Tibial artery (tissue), 4 donors: ENCODE measurements at regions of chr4 and their contacts with region 1.

Region 1: GRCh38 chr4:1011022-1011694 is at the start of gene FGFRL1:
- DNase-seq: peak; percentile 88 to 95
- H3K4me3 ChIP-seq: peak within 1 kb of the TSS; percentile 65 to 66
- H3K27ac ChIP-seq: peak within 1 kb of the TSS; percentile 69 to 84
- H3K4me1 ChIP-seq: peaks cover 0 to 43% (median 32%) of the 10 kb centered on the region in 4 donors
- H3K27me3 ChIP-seq: peaks cover 0 to 23% of the 10 kb centered on the region in 2 donors
- CTCF ChIP-seq: no peak

Region 2: DNA sequence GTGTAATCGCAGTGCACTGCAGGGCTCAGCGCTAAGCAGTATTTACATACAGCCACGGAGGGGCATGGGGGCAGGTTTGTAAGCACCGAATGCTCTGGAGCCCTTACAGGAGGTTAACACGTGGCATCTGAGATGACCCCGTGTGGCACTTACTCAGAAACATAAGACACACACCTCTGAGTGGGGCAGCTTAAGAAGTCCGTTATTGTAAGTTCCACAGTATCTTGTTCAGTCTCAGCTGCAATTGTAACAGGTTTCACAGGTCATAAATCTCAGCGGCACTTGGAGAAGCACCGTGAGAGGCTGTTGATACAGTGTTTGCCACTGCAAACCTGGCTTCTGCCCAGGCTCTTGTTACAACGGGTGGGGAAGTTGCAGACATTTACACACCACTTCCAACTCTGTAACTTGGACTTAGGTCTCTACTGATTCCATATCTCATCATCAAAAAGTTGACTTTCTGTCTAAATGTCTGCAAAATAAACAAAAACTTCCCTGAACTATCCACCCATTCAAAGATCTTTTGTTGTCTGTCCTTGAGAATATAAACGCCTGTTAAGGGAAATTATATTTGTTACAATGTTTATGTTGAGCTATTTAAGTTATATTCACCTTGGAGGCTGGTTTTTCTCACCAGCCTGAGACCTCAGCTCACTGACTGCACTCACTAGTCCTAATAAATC is 195.6 kb before region 1 on chr4:
- intact Hi-C with region 1: no loop called
- DNase-seq: no peak
- H3K4me3 ChIP-seq: no peak overlapping the region
- H3K27ac ChIP-seq: no peak overlapping the region
- H3K4me1 ChIP-seq: no peaks in the 10 kb centered on the region
- H3K27me3 ChIP-seq: peaks cover 0 to 74% of the 10 kb centered on the region in 2 donors
- CTCF ChIP-seq: no peak

Region 3: DNA sequence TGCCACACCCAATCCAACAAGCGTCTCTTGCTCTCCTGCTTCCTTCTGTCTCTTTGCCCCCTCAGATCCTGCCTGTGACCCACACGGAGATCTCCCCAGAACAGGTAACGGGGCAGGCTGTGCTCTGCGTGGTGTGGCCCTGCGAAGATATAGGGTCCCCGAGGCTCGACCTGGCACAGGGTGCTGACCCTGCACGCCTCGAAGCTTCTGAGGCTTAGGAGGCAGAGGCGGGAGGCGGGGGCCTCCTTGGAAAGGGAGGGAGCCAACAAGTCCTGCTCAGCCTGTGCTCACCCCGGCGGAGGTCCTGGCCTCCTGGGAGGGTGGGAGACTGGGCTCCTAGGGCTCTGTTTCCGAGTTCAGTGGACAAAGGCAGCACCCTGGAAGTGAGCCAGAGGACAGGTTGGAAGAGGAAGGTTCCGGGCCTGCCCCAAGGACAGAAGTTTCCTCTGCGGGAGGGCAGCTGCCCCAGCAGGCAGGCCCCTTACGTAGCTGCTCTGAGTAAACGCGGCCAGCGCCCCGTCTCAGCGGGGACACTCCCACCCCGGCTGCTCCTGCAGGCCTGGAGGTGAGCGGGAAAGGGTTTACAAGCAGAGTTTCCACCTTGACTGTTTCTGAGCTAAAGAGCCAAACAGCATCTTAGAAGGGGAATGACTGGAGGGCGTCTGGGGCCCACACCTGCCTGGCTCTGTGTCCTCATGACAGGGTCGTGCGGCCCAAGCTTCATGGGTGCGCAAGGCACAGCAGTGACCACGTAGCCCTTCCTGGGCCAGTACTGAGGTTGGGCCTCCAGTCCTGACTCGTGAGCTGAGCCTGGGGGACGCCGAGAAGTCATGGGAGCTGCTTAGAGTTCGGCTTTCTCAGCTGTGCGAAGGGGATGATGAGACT is 62.9 kb before region 1 on chr4:
- intact Hi-C with region 1: no loop called
- DNase-seq: peak; percentile 11 to 59
- H3K4me3 ChIP-seq: no peak overlapping the region
- H3K27ac ChIP-seq: no peak overlapping the region
- H3K4me1 ChIP-seq: peaks cover 0 to 4% (median 0%) of the 10 kb centered on the region in 4 donors
- H3K27me3 ChIP-seq: no peaks in the 10 kb centered on the region
- CTCF ChIP-seq: no peak

Region 4: GRCh38 chr4:1043658-1044468 is 32.7 kb after region 1 on chr4:
- intact Hi-C with region 1: loop called (anchors 2 kb)
- DNase-seq: peak; percentile 98 to 99
- H3K4me3 ChIP-seq: peak overlapping the region; percentile 27 to 47
- H3K27ac ChIP-seq: peak overlapping the region; percentile 64 to 79
- H3K4me1 ChIP-seq: peaks cover 17 to 86% (median 70%) of the 10 kb centered on the region in 4 donors
- H3K27me3 ChIP-seq: peaks cover 0 to 14% of the 10 kb centered on the region in 2 donors
- CTCF ChIP-seq: no peak